ENCODE measurements at regions of chr15 and their contacts with region 1.

Region 1: GRCh38 chr15:55218056-55218455 is 21.3 kb upstream of the RSL24D1 start:
- DNase-seq: no peak
- H3K4me3 ChIP-seq: no peak overlapping the region
- H3K27ac ChIP-seq: no peak overlapping the region
- H3K4me1 ChIP-seq: no peaks in the 10 kb centered on the region
- H3K27me3 ChIP-seq: no peaks in the 10 kb centered on the region
- CTCF ChIP-seq: no peak

Region 2: GRCh38 chr15:55290528-55291057 is 72.5 kb after region 1 on chr15:
- intact Hi-C with region 1: loop called (anchors 5 kb)
- DNase-seq: peak; percentile 82
- H3K4me3 ChIP-seq: peak overlapping the region; percentile 85
- H3K27ac ChIP-seq: peak overlapping the region; percentile 90
- H3K4me1 ChIP-seq: peaks cover 24% of the 10 kb centered on the region
- H3K27me3 ChIP-seq: no peaks in the 10 kb centered on the region
- CTCF ChIP-seq: peak; percentile 90

Region 3: GRCh38 chr15:55318588-55319494 is 100.8 kb after region 1 on chr15 and contains the starts of genes PIGB and PIGBOS1:
- intact Hi-C with region 1: no loop called
- DNase-seq: peak; percentile 85
- H3K4me3 ChIP-seq: peak within 1 kb of the TSS; percentile 80
- H3K27ac ChIP-seq: peak within 1 kb of the TSS; percentile 88
- H3K4me1 ChIP-seq: peaks cover 50% of the 10 kb centered on the region
- H3K27me3 ChIP-seq: no peaks in the 10 kb centered on the region
- CTCF ChIP-seq: peak; percentile 34
- total RNA-seq, gene PIGB: 2.8 TPM
- total RNA-seq, gene PIGBOS1: 7.6 TPM

Region 4: DNA sequence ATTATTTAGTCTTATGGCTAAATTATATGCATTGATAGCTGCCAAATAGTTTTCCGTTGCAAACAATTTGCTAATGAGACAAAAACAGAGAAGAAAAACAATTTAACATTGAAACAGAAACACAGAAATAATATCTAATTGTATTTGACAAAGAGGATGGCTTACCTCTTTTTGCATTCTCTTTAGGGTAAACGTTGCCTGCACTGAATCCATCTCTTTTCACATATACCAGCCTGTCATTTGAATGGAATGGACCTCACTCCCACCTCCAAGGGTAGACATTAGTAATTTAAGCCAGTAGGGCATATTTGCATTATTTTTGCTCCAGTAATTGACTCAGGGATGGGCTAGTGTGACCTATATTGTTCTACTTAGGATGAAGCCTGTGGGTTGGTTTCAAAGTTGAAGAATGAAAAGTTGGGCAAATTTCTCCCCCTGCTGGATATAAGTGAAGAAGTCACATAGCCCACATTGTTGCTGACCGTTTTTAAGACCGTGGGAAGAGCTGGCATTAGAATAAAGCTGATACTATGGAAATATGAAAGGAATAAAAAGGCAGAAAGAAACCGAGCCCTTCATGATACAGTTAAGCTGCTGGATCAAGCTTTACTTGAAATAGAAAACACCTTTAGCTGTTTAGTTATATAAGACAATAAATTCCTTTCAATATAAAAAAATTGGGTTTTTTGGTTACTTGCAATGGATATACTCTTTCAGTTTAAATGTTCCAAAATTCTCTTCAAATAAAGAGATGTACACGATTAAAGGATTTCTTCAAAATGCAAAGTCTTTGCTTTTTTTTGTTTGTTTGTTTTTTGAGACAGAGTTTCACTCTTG is 217.2 kb after region 1 on chr15:
- intact Hi-C with region 1: loop called (anchors 5 kb)
- DNase-seq: no peak
- H3K4me3 ChIP-seq: no peak overlapping the region
- H3K27ac ChIP-seq: no peak overlapping the region
- H3K4me1 ChIP-seq: no peaks in the 10 kb centered on the region
- H3K27me3 ChIP-seq: no peaks in the 10 kb centered on the region
- CTCF ChIP-seq: peak; percentile 63

Region 5: DNA sequence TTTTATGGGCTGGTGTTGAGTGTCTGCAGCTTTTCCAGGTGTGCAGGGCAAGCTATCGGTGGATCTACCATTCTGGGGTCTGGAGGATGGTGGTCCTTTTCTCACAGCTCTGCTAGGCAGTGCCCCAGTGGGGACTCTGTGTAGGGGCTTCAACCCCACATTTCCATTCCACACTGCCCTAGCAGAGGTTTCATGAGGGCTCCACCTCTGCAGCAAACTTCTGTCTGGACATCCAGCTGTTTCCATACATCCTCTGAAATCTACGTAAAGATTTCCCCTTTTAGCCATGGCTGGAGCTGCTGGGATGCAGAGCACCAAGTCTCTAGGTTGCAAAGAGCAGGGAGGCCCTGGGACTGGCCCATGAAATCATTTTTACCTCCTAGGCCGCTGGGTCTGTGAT is 1014.0 kb after region 1 on chr15:
- intact Hi-C with region 1: no loop called
- DNase-seq: no peak
- H3K4me3 ChIP-seq: no peak overlapping the region
- H3K27ac ChIP-seq: no peak overlapping the region
- H3K4me1 ChIP-seq: peaks cover 7% of the 10 kb centered on the region
- H3K27me3 ChIP-seq: no peaks in the 10 kb centered on the region
- CTCF ChIP-seq: no peak

Measured in left ventricle myocardium inferior (tissue), 1 donor.